MCF 10A (cell line): ENCODE measurements at regions of chr2 and their contacts with region 1.

Region 1: DNA sequence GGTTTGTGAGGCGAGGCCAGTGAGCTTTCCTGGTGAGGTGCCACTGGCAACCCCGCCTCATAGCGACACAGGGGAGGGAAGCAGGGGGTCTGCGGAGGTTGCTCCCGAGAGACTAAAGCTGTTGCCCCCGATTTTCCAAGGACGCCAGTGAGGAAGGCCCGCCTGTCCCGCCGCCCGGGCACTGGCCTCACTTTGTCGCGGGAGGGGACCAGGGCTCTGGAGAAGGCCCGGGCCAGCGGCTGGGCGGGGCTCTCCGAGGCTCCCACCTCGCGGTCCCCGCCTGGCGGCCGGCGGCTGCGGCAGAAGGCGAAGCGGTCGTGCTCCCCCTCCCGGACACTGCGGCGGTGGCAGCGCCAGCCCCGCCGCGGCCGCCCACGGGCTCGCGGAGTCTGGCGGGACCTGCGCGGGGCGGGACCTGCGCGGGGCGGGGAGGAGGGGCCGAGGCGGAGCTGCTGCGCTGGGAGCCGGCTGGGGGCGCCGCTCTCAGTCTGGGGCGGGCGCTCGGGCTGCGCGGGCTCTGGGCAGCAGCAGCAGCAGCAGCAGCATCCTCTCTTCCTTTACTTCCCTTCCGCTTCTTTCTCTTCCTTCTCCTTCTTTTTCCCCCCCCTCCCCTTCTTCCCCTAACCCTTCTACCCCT is at the start of gene MAP2:
- DNase-seq: peak; percentile 77
- H3K4me3 Mint-ChIP-seq: peak within 1 kb of the TSS; percentile 81
- H3K27ac Mint-ChIP-seq: no peak within 1 kb of the TSS
- H3K4me1 Mint-ChIP-seq: peaks cover 18% of the 10 kb centered on the region
- H3K27me3 Mint-ChIP-seq: no peaks in the 10 kb centered on the region
- CTCF ChIP-seq: peak; percentile 87
- total RNA-seq, gene MAP2: 16.2 and 40.2 TPM in 2 replicates

Region 2: GRCh38 chr2:208392300-208393080 is 1031.2 kb before region 1 on chr2:
- CTCF ChIA-PET with region 1: no interaction called
- POLR2A ChIA-PET with region 1: no interaction called
- intact Hi-C with region 1: loop called (anchors 2 kb)
- DNase-seq: peak; percentile 17
- H3K4me3 Mint-ChIP-seq: no peak overlapping the region
- H3K27ac Mint-ChIP-seq: no peak overlapping the region
- H3K4me1 Mint-ChIP-seq: no peaks in the 10 kb centered on the region
- H3K27me3 Mint-ChIP-seq: no peaks in the 10 kb centered on the region
- CTCF ChIP-seq: no peak

Region 3: GRCh38 chr2:209368900-209369299 is 54.8 kb before region 1 on chr2:
- CTCF ChIA-PET with region 1: interaction called, 24 read pairs
- POLR2A ChIA-PET with region 1: interaction called, 6 read pairs
- intact Hi-C with region 1: no loop called
- DNase-seq: peak; percentile 97
- H3K4me3 Mint-ChIP-seq: peak overlapping the region; percentile 48
- H3K27ac Mint-ChIP-seq: peak overlapping the region; percentile 85
- H3K4me1 Mint-ChIP-seq: peaks cover 28% of the 10 kb centered on the region
- H3K27me3 Mint-ChIP-seq: no peaks in the 10 kb centered on the region
- CTCF ChIP-seq: no peak

Region 4: GRCh38 chr2:209473930-209474419 is 50.3 kb after region 1 on chr2:
- CTCF ChIA-PET with region 1: interaction called, 4 read pairs
- POLR2A ChIA-PET with region 1: interaction called, 4 read pairs
- intact Hi-C with region 1: loop called (anchors 5 kb)
- DNase-seq: peak; percentile 93
- H3K4me3 Mint-ChIP-seq: no peak overlapping the region
- H3K27ac Mint-ChIP-seq: no peak overlapping the region
- H3K4me1 Mint-ChIP-seq: peaks cover 25% of the 10 kb centered on the region
- H3K27me3 Mint-ChIP-seq: no peaks in the 10 kb centered on the region
- CTCF ChIP-seq: no peak

Region 5: DNA sequence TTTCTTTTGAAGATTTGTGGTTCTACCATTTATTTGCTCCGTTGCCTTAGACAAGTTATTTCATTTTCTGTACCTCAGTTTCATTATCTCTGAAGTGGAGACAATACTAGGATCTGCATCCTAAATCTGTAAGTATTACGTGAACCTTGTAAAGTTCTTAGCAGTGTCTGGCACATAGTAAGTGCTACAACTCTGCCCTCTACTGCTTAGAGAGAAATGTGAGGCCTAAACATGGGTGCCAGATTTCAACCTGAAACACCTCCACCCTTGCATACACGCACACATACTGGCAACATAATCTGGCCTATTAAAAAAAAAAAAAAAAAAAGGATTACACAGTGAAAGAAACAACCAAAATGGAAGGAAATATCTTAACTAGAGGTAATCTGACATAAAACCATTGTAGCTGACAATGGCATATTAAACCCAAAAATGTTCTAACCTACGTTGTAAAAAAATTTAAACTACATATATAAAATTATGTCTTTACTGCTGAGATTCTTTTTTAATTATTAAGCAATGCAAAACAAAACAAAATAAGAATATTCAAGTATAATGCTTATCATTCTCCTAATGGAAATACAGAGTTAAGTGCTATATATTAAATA is 132.8 kb after region 1 on chr2:
- CTCF ChIA-PET with region 1: interaction called, 87 read pairs
- POLR2A ChIA-PET with region 1: interaction called, 9 read pairs
- intact Hi-C with region 1: loop called (anchors 1 kb)
- DNase-seq: peak; percentile 62
- H3K4me3 Mint-ChIP-seq: no peak overlapping the region
- H3K27ac Mint-ChIP-seq: no peak overlapping the region
- H3K4me1 Mint-ChIP-seq: no peaks in the 10 kb centered on the region
- H3K27me3 Mint-ChIP-seq: no peaks in the 10 kb centered on the region
- CTCF ChIP-seq: peak; percentile 61

Region 6: DNA sequence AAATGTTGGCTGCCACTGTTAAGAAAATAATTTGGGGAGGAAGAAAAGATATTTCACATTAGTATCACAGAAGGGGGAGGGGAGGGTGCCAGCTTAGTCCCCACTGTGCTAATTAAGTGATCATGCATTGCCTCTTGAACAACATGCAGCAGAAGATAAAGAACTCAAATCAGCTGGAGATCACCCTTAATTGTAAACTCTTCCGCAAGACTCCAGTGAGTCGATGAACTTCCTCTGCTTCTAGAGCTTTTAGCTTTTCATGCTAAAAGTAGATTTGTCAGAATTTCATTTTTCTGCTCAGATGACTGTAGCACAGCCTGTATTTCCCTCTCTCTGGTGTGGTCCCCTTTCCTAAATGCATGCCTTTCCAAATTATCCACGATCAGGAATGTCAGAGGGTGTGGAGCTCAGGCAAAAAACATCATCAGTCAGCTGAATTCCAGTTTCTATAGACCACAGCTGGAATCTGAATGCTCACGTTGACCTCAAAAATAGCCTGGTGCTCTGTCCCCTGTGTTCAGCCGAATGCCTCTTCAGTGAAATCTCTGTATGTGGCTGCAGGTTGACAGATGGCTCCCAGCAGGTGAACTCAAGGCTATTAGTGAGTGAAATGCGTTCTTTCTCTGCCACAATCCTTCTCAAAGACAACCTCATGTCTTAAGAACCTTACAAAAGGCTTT is 191.2 kb after region 1 on chr2:
- CTCF ChIA-PET with region 1: no interaction called
- POLR2A ChIA-PET with region 1: no interaction called
- intact Hi-C with region 1: no loop called
- DNase-seq: no peak
- H3K4me3 Mint-ChIP-seq: no peak overlapping the region
- H3K27ac Mint-ChIP-seq: no peak overlapping the region
- H3K4me1 Mint-ChIP-seq: no peaks in the 10 kb centered on the region
- H3K27me3 Mint-ChIP-seq: no peaks in the 10 kb centered on the region
- CTCF ChIP-seq: no peak

Region 7: DNA sequence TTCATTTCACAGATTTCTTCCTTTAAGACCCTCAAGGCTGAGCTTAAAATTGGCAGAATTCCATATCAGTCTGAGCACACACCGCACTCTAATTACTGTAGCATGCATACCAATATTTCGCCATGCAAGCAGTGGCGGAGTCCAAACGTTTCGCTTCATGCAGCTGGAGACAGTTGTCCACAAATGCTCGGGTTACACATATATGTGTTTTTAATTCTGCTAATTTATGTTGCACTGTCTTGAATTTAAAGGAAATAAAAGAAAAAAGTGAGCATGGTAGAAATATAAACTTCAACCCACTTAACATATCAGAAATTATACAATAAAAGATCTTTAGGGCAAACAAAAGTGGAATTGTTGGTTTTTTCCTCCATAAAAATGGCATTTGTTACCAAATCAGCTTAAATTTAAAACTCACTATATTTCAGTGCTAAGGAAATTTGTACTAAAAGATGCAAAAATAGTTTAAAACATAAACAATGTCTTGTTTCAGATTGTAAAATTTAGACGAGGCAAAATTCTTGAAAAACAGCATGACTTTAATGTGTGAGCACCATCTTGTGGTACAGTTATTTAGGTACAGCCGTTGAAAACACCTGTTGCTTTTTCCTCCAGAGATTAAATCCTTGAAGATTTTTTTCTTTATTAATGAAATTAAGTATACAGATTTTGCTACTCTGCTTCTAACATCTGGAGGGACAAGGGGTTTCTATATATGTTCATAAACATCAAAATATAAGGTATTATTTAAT is 771.6 kb after region 1 on chr2:
- CTCF ChIA-PET with region 1: interaction called, 3 read pairs
- POLR2A ChIA-PET with region 1: no interaction called
- intact Hi-C with region 1: loop called (anchors 5 kb)
- DNase-seq: peak; percentile 43
- H3K4me3 Mint-ChIP-seq: no peak overlapping the region
- H3K27ac Mint-ChIP-seq: no peak overlapping the region
- H3K4me1 Mint-ChIP-seq: peaks cover 6% of the 10 kb centered on the region
- H3K27me3 Mint-ChIP-seq: no peaks in the 10 kb centered on the region
- CTCF ChIP-seq: peak; percentile 53